ENCODE measurements at regions of chr11 and their contacts with region 1.

Region 1: GRCh38 chr11:10808553-10809372 is at the start of gene EIF4G2:
- DNase-seq: peak; percentile 96 to 97
- H3K4me3 ChIP-seq: peak within 1 kb of the TSS; percentile 90 to 97 (median 94)
- H3K27ac ChIP-seq: peak within 1 kb of the TSS; percentile 96
- H3K4me1 ChIP-seq: peaks cover 0 to 5% (median 2%) of the 10 kb centered on the region in 4 experiments; a peak in 4 of 7 replicates
- H3K27me3 ChIP-seq: no peaks in the 10 kb centered on the region
- CTCF ChIP-seq: no peak
- EP300 ChIP-seq: 0 out of 3 replicates have a peak, but pooled peaks of 1 of the 2 experiments have one; percentile 5
- POLR2A ChIP-seq: peak; percentile 99 to 100
- RAD21 ChIP-seq: no peak; a peak in 1 of 4 replicates
- total RNA-seq, gene EIF4G2: 949 and 964 TPM in 2 replicates

Region 2: GRCh38 chr11:10770626-10771254 is 38.0 kb before region 1 on chr11:
- CTCF ChIA-PET with region 1: interaction called, 4 read pairs
- POLR2A ChIA-PET with region 1: interaction called, 15 read pairs
- DNase-seq: peak in 1 of 2 experiments; percentile 61
- H3K4me3 ChIP-seq: no peak overlapping the region
- H3K27ac ChIP-seq: no peak overlapping the region
- H3K4me1 ChIP-seq: peaks cover 0 to 6% (median 0%) of the 10 kb centered on the region in 4 experiments; a peak in 1 of 7 replicates
- H3K27me3 ChIP-seq: no peaks in the 10 kb centered on the region
- CTCF ChIP-seq: peak; percentile 12 to 84 (median 60)
- EP300 ChIP-seq: no peak
- POLR2A ChIP-seq: no peak
- RAD21 ChIP-seq: peak; percentile 48 to 59

Region 3: GRCh38 chr11:10838083-10838482 is 29.3 kb after region 1 on chr11:
- CTCF ChIA-PET with region 1: no interaction called
- POLR2A ChIA-PET with region 1: interaction called, 42 read pairs
- DNase-seq: no peak
- H3K4me3 ChIP-seq: no peak overlapping the region
- H3K27ac ChIP-seq: no peak overlapping the region
- H3K4me1 ChIP-seq: no peaks in the 10 kb centered on the region
- H3K27me3 ChIP-seq: no peaks in the 10 kb centered on the region
- CTCF ChIP-seq: no peak
- EP300 ChIP-seq: no peak
- POLR2A ChIP-seq: no peak
- RAD21 ChIP-seq: no peak

Region 4: GRCh38 chr11:10857709-10858438 is 49.1 kb after region 1 on chr11 and contains the start of gene ZBED5:
- CTCF ChIA-PET with region 1: interaction called, 4 read pairs
- POLR2A ChIA-PET with region 1: interaction called, 144 read pairs
- DNase-seq: peak; percentile 92 to 94
- H3K4me3 ChIP-seq: peak within 1 kb of the TSS; percentile 91 to 98 (median 95)
- H3K27ac ChIP-seq: peak within 1 kb of the TSS; percentile 88
- H3K4me1 ChIP-seq: peaks cover 0 to 8% (median 2%) of the 10 kb centered on the region in 4 experiments; a peak in 3 of 7 replicates
- H3K27me3 ChIP-seq: no peaks in the 10 kb centered on the region
- CTCF ChIP-seq: no peak
- EP300 ChIP-seq: no peak
- POLR2A ChIP-seq: peak in 1 of 2 experiments; percentile 88; a peak in 2 of 3 replicates
- RAD21 ChIP-seq: 0 out of 4 replicates have a peak, but pooled peaks have one; percentile 4
- total RNA-seq, gene ZBED5: 48.7 and 54.2 TPM in 2 replicates

Region 5: GRCh38 chr11:10886652-10887250 is 78.0 kb after region 1 on chr11:
- CTCF ChIA-PET with region 1: no interaction called
- POLR2A ChIA-PET with region 1: interaction called, 12 read pairs
- DNase-seq: no peak
- H3K4me3 ChIP-seq: no peak overlapping the region
- H3K27ac ChIP-seq: no peak overlapping the region
- H3K4me1 ChIP-seq: no peaks in the 10 kb centered on the region
- H3K27me3 ChIP-seq: no peaks in the 10 kb centered on the region
- CTCF ChIP-seq: no peak
- EP300 ChIP-seq: no peak
- POLR2A ChIP-seq: no peak
- RAD21 ChIP-seq: no peak

Region 6: GRCh38 chr11:10933455-10934292 is 124.9 kb after region 1 on chr11:
- CTCF ChIA-PET with region 1: interaction called, 4 read pairs
- POLR2A ChIA-PET with region 1: interaction called, 35 read pairs
- DNase-seq: peak; percentile 65 to 96
- H3K4me3 ChIP-seq: peak overlapping the region; percentile 64 to 86 (median 76); a peak in 7 of 8 replicates
- H3K27ac ChIP-seq: peak overlapping the region; percentile 49; the same call in 1 of the 2 replicates
- H3K4me1 ChIP-seq: peaks cover 3 to 14% (median 5%) of the 10 kb centered on the region in 4 experiments; a peak in 4 of 7 replicates
- H3K27me3 ChIP-seq: peaks cover 0 to 11% (median 10%) of the 10 kb centered on the region in 4 experiments; a peak in 5 of 7 replicates
- CTCF ChIP-seq: peak; percentile 80 to 98 (median 95)
- EP300 ChIP-seq: no peak
- POLR2A ChIP-seq: peak in 1 of 2 experiments; percentile 53; a peak in 1 of 3 replicates
- RAD21 ChIP-seq: peak; percentile 97 to 98